BJ (cell line): ENCODE measurements at regions of chr2 and their contacts with region 1.

Region 1: DNA sequence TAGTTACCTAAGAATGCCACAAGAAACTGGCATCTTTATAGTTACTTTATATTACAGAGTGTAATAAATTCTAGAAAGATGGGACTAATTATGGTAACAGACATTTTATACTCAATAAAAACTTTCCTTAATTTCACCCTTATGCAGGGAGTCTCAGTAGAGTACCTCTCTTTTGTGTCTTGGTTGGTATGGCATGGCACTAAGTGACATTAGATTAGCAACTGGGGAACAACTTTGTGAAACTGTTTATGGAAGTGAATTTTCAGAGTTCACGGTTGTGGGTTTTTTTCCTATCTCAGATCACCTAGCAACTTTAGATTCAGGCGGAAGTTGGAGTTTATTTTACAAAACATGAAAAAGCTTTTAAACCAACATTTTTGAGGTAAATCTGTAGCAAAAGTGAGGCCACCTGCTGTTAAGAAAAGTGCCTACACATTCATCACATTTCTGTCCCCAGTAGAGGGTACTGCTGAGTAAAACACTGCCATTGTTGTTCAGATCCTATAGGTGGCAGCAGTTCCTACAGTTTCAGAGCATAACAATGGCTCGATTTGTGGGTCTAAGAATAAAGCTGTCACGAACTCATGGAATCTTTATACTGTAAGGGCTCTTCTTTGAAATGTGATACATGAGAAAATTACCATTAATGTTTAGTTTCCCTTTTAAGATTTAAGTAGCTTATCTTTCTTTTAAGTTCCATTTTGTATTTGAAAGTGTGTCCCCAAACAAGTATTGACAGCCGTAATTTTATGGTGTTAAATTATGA is 117.6 kb downstream of the CAMKMT start:
- DNase-seq: peak; percentile 28
- H3K4me3 ChIP-seq: no peak overlapping the region
- H3K27me3 ChIP-seq: no peaks in the 10 kb centered on the region
- CTCF ChIP-seq: peak; percentile 100

Region 2: GRCh38 chr2:44044281-44044720 is 435.0 kb before region 1 on chr2:
- CTCF ChIA-PET with region 1: interaction called, 16 read pairs
- POLR2A ChIA-PET with region 1: no interaction called
- DNase-seq: peak; percentile 9
- H3K4me3 ChIP-seq: no peak overlapping the region
- H3K27me3 ChIP-seq: peaks cover 5% of the 10 kb centered on the region
- CTCF ChIP-seq: peak; percentile 97

Region 3: DNA sequence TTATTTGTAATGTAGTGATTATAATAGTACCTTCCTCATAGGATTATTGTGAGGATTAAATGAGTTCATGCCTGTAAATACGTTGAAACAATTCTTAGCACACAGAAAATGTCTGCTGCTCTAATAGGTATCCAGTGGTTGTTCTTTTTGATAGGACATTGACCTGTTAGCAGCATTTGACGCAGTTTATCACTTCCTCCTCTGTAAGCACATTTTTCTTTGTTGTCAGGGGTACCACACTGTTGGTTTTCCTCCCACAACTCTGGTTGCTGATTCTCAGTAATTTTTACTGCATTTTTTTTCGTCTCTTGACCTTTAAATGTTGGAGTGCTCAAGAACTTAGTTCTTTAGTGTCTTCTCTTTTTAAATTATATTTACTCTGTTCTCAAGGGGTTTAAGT is 295.2 kb before region 1 on chr2:
- CTCF ChIA-PET with region 1: no interaction called
- POLR2A ChIA-PET with region 1: no interaction called
- DNase-seq: no peak
- H3K4me3 ChIP-seq: no peak overlapping the region
- H3K27me3 ChIP-seq: no peaks in the 10 kb centered on the region
- CTCF ChIP-seq: no peak

Region 4: DNA sequence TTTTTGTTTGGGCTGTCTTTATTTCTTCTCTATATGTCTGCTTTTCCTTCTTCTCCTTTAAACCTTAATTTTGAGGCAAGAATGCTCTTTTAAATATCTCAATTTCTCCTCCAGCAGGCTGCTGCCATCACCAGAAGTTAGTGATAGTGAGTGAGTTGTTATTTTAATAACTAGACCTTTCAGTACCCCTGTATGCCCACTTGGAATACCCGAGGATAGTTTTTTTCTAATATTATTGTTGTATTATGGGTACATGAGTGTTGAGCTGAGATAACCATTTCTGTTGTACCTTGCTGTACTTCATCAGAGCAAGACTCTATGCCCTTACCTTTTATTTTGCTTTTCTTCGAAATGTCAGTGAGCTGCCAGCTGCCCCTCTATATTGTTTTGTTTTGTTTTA is 260.5 kb before region 1 on chr2:
- CTCF ChIA-PET with region 1: no interaction called
- POLR2A ChIA-PET with region 1: no interaction called
- DNase-seq: no peak
- H3K4me3 ChIP-seq: no peak overlapping the region
- H3K27me3 ChIP-seq: no peaks in the 10 kb centered on the region
- CTCF ChIP-seq: no peak

Region 5: DNA sequence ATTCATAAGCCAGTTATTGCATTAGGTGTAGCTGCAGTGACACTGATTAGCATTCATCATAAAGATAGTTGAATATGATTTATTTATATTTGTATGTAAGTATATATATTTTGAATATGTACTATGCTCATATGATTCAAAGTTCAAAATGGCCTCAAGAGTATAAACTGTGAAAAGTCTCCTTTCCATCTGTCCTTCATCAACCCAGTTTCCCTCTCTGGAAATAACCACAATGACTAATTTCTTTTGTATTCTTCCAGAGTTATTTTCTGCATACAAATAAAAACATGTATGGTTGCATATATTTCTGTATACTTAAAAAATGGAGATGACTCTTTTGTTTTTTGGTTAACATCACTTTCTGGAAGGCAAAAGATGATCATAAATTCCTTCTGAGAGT is 22.4 kb before region 1 on chr2:
- CTCF ChIA-PET with region 1: interaction called, 10 read pairs
- POLR2A ChIA-PET with region 1: no interaction called
- DNase-seq: no peak
- H3K4me3 ChIP-seq: no peak overlapping the region
- H3K27me3 ChIP-seq: no peaks in the 10 kb centered on the region
- CTCF ChIP-seq: no peak

Region 6: DNA sequence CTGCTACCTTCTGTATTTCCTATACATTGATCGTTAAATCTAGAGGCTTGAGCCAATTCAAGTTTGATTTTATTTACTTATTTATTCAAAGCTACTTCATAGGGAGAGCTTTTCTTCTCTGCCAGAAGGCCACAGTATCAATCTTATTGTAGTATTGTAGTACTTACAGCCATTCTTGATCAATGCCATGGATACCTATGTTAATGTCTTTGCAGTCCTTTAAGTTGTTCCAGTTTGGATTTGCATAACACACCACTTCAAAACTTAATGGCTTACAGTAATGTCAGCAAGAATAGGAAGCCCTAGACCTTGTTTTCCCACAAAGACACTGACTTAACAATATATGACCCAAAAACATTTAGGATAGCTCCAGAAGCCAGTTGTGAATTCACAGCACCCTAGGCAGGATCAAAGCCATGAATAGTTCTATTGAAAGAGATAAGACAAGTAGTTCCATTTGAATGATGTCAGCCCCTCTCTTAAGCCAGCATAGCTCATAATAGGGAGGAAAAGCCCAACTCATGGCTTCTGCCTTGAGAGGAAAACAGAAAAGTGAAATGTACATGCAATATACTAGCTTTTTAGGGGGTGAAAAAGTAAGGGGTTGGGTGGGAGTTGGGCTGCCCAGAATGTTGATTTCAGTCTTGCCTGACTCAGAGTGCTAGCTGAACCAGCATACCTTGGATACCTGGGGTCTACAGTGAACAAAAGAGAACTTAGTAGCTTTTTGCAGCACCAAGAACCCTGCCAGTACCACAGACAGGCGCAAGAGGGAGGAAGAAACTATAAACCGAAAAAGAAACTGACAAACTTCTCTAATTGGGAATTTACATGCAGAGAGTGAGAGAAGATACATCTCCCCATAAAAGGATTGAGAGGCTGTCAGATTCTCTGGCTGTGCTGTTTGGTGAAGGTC is 16.1 kb before region 1 on chr2:
- CTCF ChIA-PET with region 1: interaction called, 29 read pairs
- POLR2A ChIA-PET with region 1: no interaction called
- DNase-seq: no peak
- H3K4me3 ChIP-seq: no peak overlapping the region
- H3K27me3 ChIP-seq: no peaks in the 10 kb centered on the region
- CTCF ChIP-seq: no peak

Region 7: GRCh38 chr2:44668336-44668735 is 189.0 kb after region 1 on chr2:
- CTCF ChIA-PET with region 1: interaction called, 33 read pairs
- POLR2A ChIA-PET with region 1: no interaction called
- DNase-seq: no peak
- H3K4me3 ChIP-seq: no peak overlapping the region
- H3K27me3 ChIP-seq: peaks cover 1% of the 10 kb centered on the region; the same call in 1 of the 2 replicates
- CTCF ChIP-seq: peak; percentile 23; the same call in 1 of the 2 replicates

Region 8: DNA sequence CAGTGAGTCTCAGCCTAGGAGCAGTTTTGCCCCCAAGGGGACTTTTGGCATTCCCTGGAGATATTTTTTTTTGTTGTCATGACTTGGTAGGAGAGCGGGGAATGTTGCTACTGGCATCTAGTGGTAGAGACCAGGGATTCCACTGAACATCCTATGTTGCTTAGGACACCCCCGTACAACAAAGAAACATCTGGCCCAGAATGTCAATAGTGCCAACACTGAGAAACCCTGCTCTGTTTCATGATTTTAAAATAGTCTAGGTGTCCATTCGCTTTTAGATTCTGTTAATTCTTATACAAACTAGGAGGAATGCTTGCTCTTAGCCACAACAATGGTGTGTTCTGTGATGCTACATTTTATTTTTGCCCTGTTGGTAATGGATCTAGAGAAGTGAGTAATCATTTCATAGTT is 236.4 kb after region 1 on chr2:
- CTCF ChIA-PET with region 1: interaction called, 41 read pairs
- POLR2A ChIA-PET with region 1: no interaction called
- DNase-seq: peak; percentile 17
- H3K4me3 ChIP-seq: no peak overlapping the region
- H3K27me3 ChIP-seq: no peaks in the 10 kb centered on the region; the same call in 1 of the 2 replicates
- CTCF ChIP-seq: peak; percentile 68

Region 9: DNA sequence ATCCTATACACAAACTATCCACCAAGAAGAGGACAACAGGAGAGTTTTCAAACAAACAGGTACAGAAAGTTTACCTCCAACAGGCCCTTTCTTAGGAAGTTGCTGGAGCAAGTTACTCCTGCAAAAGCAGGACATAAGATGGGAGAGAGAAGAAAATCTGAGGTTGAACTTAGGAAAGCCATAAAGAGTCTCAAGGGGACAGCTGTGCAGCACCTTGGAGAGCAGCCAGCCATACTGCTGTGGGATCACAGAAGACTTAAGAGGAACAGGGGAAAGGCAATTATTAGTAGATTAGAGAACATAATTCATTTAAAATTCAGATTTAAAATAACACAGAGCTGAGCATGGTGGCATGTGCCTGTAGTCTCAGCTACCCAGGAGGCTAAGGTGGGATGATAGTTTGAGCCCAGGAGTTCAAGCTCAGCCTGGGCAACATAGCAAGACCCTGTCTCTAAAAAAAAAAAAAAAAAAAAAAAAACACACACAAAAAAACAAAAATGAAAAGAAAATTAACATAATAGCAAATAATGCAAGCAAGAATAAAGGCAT is 314.1 kb after region 1 on chr2:
- CTCF ChIA-PET with region 1: no interaction called
- POLR2A ChIA-PET with region 1: no interaction called
- DNase-seq: no peak
- H3K4me3 ChIP-seq: no peak overlapping the region
- H3K27me3 ChIP-seq: peaks cover 8% of the 10 kb centered on the region; the same call in 1 of the 2 replicates
- CTCF ChIP-seq: no peak

Region 10: DNA sequence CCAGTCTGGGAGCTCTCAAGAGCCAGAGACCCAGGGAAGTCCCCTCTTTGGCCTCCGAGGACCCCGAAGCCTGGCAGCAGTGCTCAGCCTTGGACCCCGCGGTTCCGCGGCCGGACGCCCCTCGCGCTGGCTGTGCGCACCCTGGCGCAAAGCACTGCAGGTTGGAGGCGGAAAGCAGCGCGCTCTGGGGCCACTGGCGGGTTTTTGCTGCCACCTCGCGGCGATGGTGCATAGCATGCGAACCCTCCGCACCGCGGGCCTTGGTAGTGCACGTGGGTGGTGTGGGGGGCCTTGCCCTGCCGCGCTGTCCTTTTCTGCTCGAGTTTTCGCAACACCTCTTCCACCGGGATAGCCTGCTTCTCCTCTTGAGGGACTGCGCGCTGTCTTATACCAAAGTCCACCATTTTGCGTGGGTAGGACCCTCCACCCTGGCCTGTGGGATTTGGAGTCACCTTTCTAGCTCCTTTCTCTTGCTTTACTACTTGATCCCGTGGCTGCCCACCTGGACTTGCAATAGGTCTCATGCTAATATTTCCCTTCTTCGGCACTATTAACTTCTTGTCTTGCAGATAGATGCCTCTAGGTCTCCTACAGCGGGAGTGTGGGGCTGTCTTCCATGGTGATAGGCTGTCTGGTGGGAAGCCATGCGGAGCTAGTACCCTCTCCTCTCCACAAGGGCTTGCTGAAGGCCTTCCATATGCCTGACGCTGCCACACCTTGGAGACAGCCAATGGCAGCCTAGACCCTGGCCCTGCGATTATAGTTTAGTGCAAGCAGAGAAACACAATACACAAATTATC is 476.5 kb after region 1 on chr2:
- CTCF ChIA-PET with region 1: interaction called, 56 read pairs
- POLR2A ChIA-PET with region 1: no interaction called
- DNase-seq: no peak
- H3K4me3 ChIP-seq: no peak overlapping the region; the same call in 1 of the 2 replicates
- H3K27me3 ChIP-seq: peaks cover 41% of the 10 kb centered on the region
- CTCF ChIP-seq: peak; percentile 92